GM12878 (cell line): ENCODE measurements at regions of chr2 and their contacts with region 1.

Region 1: GRCh38 chr2:3242747-3243369 is 134.8 kb downstream of the EIPR1 start:
- DNase-seq: peak; percentile 34
- ATAC-seq: peak; percentile 79
- H3K4me3 ChIP-seq: no peak overlapping the region
- H3K27ac ChIP-seq: no peak overlapping the region; the same call in 1 of the 2 replicates
- H3K4me1 ChIP-seq: peaks cover 25% of the 10 kb centered on the region
- H3K27me3 ChIP-seq: no peaks in the 10 kb centered on the region
- CTCF ChIP-seq: no peak
- EP300 ChIP-seq: no peak
- POLR2A ChIP-seq: no peak
- RAD21 ChIP-seq: no peak

Region 2: DNA sequence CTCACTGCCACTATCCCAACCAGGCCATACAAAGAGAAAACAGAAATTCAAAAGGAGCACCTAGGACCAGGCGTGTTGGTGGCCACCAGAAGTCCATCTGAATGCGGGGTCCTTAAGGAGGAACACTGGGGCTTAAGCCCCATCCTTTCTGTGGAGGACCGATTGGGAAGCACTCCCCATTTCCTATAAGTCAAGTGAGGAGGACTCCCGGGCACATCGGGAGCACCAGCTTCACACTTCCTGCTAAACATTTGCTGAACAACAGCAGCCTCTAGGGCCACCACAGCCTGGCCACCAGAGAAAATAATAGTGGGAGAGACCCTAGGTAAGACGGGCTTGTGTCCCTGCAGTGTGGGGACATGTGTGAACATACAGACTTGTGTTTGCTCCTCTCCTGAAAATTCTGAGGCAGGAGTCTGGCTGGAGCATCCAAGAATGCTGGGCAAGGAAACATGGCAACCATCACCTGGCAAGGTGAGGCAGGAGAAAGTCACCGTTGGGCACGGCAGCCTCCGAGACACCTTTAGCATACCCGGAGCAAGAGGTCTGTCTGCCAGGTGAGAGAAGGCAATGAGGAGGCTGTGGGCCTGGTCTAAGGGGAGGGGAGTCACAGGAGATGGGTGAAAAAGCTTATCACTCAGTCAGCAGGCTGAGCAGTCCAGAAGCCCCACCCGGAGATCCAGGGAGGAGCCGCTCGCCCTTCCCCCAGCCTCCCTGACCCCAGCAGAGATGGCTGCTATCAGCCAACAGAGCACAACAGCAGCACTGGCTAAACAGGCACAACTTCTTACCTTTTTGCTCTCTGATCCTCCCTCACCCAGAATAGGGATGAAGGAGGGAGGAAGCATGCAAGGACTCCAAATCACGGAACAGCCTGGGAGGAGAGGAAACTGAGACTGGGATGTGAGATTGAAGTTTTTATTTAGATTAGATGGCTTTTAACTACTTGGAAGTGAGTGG is 147.6 kb before region 1 on chr2:
- CTCF ChIA-PET with region 1: no interaction called
- POLR2A ChIA-PET with region 1: no interaction called
- RAD21 ChIA-PET with region 1: no interaction called
- SMC1A ChIA-PET with region 1: no interaction called
- in situ Hi-C with region 1: no loop called
- intact Hi-C with region 1: no loop called
- DNase-seq: no peak
- ATAC-seq: no peak
- H3K4me3 ChIP-seq: no peak overlapping the region
- H3K27ac ChIP-seq: no peak overlapping the region
- H3K4me1 ChIP-seq: peaks cover 9% of the 10 kb centered on the region; the same call in 1 of the 2 replicates
- H3K27me3 ChIP-seq: no peaks in the 10 kb centered on the region
- CTCF ChIP-seq: no peak
- EP300 ChIP-seq: no peak
- POLR2A ChIP-seq: no peak
- RAD21 ChIP-seq: no peak

Region 3: GRCh38 chr2:3254442-3254941 is 11.6 kb after region 1 on chr2:
- CTCF ChIA-PET with region 1: interaction called, 4 read pairs
- POLR2A ChIA-PET with region 1: interaction called, 3 read pairs
- RAD21 ChIA-PET with region 1: interaction called, 4 read pairs
- SMC1A ChIA-PET with region 1: interaction called, 12 read pairs
- in situ Hi-C with region 1: no loop called
- intact Hi-C with region 1: no loop called
- DNase-seq: peak; percentile 39
- ATAC-seq: peak; percentile 88
- H3K4me3 ChIP-seq: no peak overlapping the region
- H3K27ac ChIP-seq: peak overlapping the region; percentile 69
- H3K4me1 ChIP-seq: peaks cover 16% of the 10 kb centered on the region
- H3K27me3 ChIP-seq: no peaks in the 10 kb centered on the region
- CTCF ChIP-seq: no peak
- EP300 ChIP-seq: peak; percentile 87 to 96; a peak in 2 of 4 replicates
- POLR2A ChIP-seq: no peak
- RAD21 ChIP-seq: no peak

Region 4: GRCh38 chr2:3288470-3289163 is 45.8 kb after region 1 on chr2:
- CTCF ChIA-PET with region 1: no interaction called
- POLR2A ChIA-PET with region 1: no interaction called
- RAD21 ChIA-PET with region 1: no interaction called
- SMC1A ChIA-PET with region 1: no interaction called
- in situ Hi-C with region 1: no loop called
- intact Hi-C with region 1: no loop called
- DNase-seq: no peak
- ATAC-seq: no peak
- H3K4me3 ChIP-seq: no peak overlapping the region
- H3K27ac ChIP-seq: no peak overlapping the region
- H3K4me1 ChIP-seq: no peaks in the 10 kb centered on the region
- H3K27me3 ChIP-seq: no peaks in the 10 kb centered on the region
- CTCF ChIP-seq: no peak
- EP300 ChIP-seq: no peak
- POLR2A ChIP-seq: no peak
- RAD21 ChIP-seq: no peak